ENCODE measurements at regions of chr5 and their contacts with region 1.

Region 1: DNA sequence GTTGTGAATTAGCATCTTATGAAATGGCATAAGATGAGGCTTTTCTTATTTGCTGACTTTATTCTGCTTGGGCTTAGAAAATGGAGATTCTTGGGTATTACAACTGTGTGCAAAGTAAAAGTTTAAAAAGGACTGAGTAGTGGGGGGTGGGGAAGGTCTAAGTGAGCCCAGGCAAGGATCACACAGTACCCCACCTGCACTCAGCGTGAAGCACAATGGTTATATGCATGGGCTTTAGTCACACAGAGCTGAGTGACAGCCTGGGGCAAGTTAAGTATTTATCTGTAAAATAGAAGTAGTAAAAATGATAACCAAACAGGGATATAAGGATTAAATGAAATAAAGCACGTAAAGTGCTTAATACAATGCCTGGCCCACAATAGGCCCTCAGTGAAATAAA is 247.4 kb downstream of the FAM114A2 start:
- DNase-seq: no peak
- H3K4me3 Mint-ChIP-seq: no peak overlapping the region
- H3K27ac Mint-ChIP-seq: no peak overlapping the region
- H3K4me1 Mint-ChIP-seq: no peaks in the 10 kb centered on the region
- H3K27me3 Mint-ChIP-seq: peaks cover 25% of the 10 kb centered on the region
- CTCF ChIP-seq: no peak

Region 2: GRCh38 chr5:153610009-153610408 is 181.3 kb before region 1 on chr5:
- CTCF ChIA-PET with region 1: interaction called, 10 read pairs
- intact Hi-C with region 1: no loop called
- DNase-seq: no peak
- H3K4me3 Mint-ChIP-seq: no peak overlapping the region
- H3K27ac Mint-ChIP-seq: no peak overlapping the region
- H3K4me1 Mint-ChIP-seq: no peaks in the 10 kb centered on the region
- H3K27me3 Mint-ChIP-seq: peaks cover 14% of the 10 kb centered on the region
- CTCF ChIP-seq: no peak

Measured in Calu3 (cell line).